ENCODE measurements at regions of chr10 and their contacts with region 1.

Region 1: DNA sequence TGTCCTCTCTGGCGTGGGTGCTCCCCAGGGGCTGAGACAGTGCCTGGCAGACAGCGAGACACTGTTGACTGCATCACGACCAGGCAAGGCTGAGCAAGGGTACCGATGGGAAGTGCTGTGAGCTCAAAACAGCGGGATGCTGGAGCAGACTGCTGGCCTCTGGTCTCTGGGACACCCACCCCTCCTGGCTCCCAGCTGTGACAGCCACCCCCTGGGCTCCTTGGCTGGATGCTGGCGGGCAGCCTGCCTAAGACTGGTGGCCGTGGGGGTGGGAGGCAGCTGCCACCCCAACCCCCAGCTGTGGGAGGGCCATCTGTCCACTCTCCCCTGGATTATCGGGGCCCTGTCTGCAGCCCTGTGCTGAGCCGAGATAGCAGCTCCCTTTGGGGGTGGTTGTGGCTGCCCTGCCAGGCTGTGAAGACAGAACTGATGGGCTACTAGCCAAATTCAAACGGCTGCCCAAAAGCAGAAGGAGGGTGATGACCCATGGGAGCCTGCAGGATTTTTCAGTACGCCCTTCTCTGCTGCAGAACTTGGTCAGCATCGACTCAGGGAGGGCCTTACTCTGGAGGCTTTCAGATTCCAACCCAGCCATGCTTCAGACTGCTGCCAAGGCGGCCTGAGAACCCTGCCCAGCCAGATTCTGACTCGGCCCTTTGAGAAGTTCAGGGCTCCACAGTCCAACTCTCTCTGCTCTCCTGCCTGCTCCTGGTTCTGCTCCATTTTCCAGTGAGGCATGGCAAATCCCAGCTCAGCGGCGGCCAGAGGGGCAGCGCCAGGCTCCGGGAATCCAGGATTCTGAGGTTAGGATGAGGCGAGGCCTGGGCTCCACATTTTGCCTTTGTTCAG is 125.3 kb downstream of the NEURL1 start:
- DNase-seq: peak; percentile 88
- ATAC-seq: peak; percentile 64

Region 2: DNA sequence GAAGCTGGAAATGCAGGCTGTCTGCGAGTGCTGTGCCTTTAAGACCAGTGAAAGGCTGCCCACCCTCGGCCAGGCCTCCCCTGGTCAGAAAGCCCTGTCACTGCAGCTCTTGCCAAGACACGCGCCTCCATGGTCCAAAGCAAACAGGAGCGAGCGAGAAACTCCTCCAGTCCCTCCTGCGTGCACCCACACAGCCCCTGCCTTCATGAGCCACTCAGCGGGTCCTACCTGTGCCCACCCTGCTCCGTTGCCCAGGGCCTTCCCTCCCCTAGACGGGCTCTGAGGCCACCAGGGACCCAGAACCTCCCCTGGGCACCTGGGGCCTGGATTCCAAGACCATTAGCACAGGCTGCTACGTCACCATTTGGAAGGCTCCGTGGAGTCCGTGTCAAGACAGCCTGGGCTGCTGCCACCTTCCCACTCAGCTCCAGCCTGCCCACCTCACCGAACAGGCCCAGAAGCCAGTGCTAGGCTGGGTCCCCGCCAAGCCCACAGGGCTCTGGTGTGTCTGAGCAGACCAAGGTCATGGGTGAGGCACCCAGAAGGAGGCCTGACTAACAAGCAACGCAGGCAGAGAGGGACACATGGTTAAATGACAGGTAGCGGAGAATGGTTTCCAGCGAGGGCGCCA is 19.2 kb after region 1 on chr10:
- intact Hi-C with region 1: loop called (anchors 2 kb)
- DNase-seq: peak; percentile 86
- ATAC-seq: peak; percentile 78

Region 3: DNA sequence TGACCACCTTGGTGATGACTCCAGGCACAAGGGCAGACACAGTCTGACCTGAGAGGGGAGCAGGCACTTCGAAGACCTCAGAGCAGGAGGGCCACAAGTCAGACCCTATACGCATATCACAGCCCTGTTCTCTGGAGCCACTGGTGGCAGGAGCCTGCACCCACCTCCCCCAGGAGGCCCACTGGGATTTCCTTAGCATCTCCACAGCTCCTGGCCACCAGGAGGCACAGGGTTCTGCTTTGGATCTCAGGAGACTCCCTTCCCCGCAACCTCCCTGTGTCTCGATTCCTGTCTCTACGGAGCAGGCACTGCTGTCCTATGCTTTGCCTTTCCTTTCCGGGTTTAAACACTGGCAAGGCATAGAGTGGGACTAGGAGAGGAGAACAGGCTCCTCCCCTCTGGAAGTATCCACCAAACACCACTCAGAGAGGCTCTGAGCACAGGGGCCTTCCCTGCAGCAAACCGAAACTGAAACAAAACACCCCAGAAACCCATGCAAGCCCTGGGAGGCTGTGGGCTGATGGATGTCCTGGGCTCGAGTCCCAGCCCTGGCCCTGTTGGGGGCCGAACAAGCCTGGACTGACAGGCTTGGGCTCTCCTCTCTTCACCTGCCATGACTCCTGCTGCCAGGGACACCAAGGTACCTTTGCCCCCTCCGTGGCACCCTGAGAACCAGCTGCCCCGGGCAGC is 41.0 kb after region 1 on chr10:
- intact Hi-C with region 1: loop called (anchors 5 kb)
- DNase-seq: peak; percentile 83
- ATAC-seq: peak; percentile 85